GM13977 (cell line): ENCODE measurements at regions of chr10 and their contacts with region 1.

Region 1: DNA sequence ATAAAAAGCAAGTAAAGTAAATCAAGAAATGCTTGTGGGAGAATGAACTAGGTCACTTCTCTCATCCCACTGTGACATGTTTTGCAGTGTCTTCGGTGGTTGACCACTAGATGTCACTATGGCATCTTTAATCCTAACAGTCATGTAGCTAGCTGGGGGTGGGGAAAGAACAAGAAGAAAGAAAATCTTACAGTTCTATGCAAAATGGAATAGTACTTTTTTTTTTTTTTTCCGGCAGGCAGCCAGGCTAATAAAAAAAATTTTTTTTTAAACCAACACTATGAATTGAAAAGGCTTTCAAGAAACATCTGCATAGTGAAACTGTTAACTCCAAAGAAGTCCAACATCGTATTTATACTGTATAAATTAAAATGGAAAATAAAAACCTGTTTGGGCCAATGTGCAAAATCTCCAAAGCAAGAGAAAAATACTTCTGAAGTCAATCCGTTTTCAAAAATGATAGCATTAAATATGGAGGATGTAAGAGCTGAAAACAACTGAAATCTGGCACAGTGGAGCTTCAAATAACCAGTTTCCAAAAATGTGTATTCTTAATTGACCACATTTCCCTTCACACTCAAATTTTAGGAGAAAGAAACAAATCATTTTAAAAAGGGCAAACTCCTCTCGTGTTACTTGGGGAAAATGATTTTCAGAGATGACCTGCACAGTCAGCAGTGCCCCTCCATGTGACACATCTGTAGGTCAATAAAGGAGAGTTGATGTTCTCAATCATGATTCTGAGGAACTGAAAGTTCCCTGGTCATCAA is 38.5 kb downstream of the CDK1 start:
- DNase-seq: peak; percentile 63
- CTCF ChIP-seq: peak; percentile 85

Region 2: GRCh38 chr10:60237977-60238758 is 578.6 kb before region 1 on chr10:
- in situ Hi-C with region 1: no loop called
- DNase-seq: peak; percentile 34
- CTCF ChIP-seq: peak; percentile 57

Region 3: GRCh38 chr10:60733189-60733822 is 83.5 kb before region 1 on chr10:
- in situ Hi-C with region 1: no loop called
- DNase-seq: peak; percentile 55
- CTCF ChIP-seq: peak; percentile 31

Region 4: GRCh38 chr10:60964257-60965235 is 147.7 kb after region 1 on chr10:
- in situ Hi-C with region 1: loop called (anchors 25 kb)
- DNase-seq: peak; percentile 28
- CTCF ChIP-seq: peak; percentile 77

Region 5: GRCh38 chr10:61284222-61284890 is 467.5 kb after region 1 on chr10:
- in situ Hi-C with region 1: loop called (anchors 25 kb)
- DNase-seq: peak; percentile 8
- CTCF ChIP-seq: peak; percentile 66